HepG2 (cell line): ENCODE measurements at regions of chr7 and their contacts with region 1.

Region 1: DNA sequence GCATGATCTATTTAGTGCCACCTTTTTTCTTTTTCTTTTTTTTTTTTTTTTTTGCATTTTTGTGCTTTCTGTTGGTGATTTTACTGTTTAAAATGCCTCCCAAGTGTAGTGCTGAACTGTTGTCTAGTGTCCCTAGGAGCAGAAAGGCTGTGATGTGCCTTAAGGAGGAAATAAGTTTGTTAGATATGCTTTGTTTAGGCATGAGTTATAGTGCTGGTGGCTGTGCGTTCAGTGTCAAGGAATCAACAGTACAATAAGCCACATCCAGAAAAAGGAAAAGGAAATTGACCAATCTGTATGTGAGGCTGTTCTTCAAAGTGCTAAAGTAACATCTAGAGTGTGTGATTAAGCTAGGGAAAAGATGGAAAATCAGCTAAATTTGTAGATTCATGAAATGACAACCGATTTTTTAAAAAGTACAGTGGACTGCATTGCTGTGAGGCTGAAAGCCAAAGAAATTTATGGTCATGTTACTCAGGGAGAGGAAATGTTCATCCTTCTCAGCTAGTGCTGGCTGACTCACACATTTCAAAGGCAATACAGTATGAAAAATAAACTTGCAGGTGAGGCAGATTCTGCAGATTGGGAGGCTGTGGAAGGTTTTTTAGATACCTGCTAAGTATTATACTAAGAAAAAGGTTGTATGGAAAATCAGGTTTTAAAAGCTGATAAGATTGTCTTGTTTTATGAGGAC is 122.7 kb upstream of the ADCY1 start:
- DNase-seq: no peak
- ATAC-seq: no peak
- H3K4me3 ChIP-seq: no peak overlapping the region
- H3K27ac ChIP-seq: no peak overlapping the region
- H3K4me1 ChIP-seq: peaks cover 26% of the 10 kb centered on the region
- H3K27me3 ChIP-seq: no peaks in the 10 kb centered on the region
- CTCF ChIP-seq: no peak
- EP300 ChIP-seq: no peak
- POLR2A ChIP-seq: no peak
- RAD21 ChIP-seq: no peak

Region 2: DNA sequence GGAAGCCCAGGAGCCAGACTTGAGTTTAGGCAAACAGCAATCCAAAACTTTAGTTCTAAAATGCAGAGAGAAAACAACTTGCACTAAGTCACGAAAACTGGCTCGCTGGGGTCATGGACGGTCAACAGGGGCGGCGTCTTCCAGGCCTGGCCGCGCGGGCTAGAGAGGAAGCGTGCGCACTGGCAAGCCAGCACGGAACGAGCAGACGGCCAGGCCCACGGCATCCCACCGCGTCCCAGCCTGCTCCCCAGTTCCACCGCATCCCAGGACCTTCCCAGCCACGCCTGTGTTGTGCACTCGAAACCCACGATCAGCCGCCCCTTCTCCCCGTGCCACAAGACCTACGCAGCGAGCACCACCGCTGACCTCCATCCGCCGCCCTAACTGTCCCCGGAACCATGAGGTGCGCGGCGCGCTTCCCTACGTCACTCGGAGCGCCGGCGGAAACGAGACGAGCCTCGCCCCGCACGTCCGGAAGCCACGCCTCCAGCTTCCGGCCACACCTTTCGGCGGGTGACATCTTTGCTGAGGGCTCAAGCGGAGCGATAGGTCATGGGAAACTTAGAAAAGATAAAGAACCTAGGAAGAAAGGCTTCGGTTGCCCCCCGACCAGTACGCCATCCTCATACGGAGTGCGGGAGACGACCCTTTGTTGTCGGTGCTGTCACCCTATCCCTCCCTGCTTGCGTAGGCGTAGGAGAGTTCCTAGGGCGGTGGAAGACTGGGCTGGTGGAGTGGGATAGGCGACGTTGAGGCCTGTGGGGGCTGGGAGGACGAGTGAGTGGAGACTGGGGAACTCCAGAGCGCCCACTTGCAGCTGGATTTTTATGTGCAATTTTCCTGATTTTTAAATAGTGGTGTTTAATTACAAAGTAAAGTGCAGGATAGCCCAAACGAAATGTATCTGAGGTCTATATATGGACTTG is 339.9 kb before region 1 on chr7 and contains the start of gene TBRG4:
- CTCF ChIA-PET with region 1: no interaction called
- POLR2A ChIA-PET with region 1: no interaction called
- in situ Hi-C with region 1: no loop called
- intact Hi-C with region 1: no loop called
- DNase-seq: peak; percentile 90
- ATAC-seq: peak; percentile 92
- H3K4me3 ChIP-seq: peak within 1 kb of the TSS; percentile 83 to 97 (median 92)
- H3K27ac ChIP-seq: peak within 1 kb of the TSS; percentile 94
- H3K4me1 ChIP-seq: peaks cover 57% of the 10 kb centered on the region
- H3K27me3 ChIP-seq: no peaks in the 10 kb centered on the region; a peak in 1 of 5 replicates
- CTCF ChIP-seq: peak; percentile 55
- EP300 ChIP-seq: peak in 1 of 2 experiments; percentile 27; a peak in 1 of 4 replicates
- POLR2A ChIP-seq: peak; percentile 97
- RAD21 ChIP-seq: peak; percentile 43; the same call in 1 of the 2 replicates
- total RNA-seq, gene TBRG4: 87.8 and 90.3 TPM in 2 replicates

Region 3: DNA sequence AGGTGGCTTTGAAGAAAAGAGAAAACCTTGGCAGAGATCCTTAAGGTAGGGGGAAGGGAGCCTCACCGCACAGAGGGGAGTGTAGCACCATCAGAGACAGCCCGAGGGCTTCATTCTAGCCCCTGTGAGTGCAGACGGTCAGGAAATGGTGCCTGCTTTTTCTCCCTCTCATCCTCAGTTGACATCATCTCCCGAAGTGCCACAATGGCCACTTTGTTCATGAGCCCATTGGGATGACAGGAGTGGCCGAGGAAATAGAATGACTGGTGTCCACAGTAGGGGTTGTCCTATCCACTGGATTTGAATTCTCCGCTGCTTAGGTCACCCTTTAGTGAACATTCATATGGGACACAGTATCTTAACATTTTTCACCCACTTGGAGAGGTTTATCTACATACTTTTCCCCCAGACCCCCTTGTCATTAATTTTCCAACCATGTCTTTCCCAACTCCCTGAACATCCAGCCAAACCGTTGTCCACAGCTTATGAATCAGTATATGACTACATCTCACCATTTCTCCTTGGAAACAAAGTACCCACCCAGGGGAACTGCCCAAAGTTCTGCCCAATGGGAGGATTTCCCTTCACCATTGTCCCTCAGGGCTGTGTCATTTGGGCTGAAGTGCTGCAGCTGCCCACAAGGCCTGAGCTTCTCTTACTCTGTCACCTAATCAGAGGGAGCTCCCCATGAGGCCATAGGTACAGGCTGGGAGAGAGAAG is 231.5 kb after region 1 on chr7:
- CTCF ChIA-PET with region 1: no interaction called
- POLR2A ChIA-PET with region 1: no interaction called
- in situ Hi-C with region 1: no loop called
- intact Hi-C with region 1: no loop called
- DNase-seq: no peak
- ATAC-seq: no peak
- H3K4me3 ChIP-seq: no peak overlapping the region
- H3K27ac ChIP-seq: no peak overlapping the region
- H3K4me1 ChIP-seq: peaks cover 10% of the 10 kb centered on the region; the same call in 1 of the 2 replicates
- H3K27me3 ChIP-seq: peaks cover 0 to 3% of the 10 kb centered on the region in 2 experiments; a peak in 1 of 5 replicates
- CTCF ChIP-seq: no peak
- EP300 ChIP-seq: no peak
- POLR2A ChIP-seq: no peak
- RAD21 ChIP-seq: no peak

Region 4: DNA sequence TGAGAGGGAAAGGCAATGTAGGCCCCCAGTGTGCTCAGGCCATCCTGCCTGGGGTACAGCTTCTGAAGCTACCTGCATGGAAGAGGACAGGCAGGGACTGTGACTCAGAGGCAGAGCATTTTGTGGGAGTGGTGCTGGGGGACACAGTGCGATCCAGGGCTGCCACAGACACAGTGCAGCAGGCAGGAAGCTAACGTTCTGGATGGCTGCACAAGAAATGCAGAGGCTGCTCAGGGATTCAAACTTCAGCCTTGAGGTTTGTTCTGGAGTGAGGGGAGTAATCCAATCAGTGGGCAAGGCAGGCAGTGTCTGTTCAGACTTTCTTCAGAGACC is 1117.6 kb after region 1 on chr7:
- CTCF ChIA-PET with region 1: no interaction called
- POLR2A ChIA-PET with region 1: no interaction called
- in situ Hi-C with region 1: no loop called
- intact Hi-C with region 1: loop called (anchors 5 kb)
- DNase-seq: peak; percentile 3
- ATAC-seq: peak; percentile 65
- H3K4me3 ChIP-seq: no peak overlapping the region
- H3K27ac ChIP-seq: no peak overlapping the region
- H3K4me1 ChIP-seq: no peaks in the 10 kb centered on the region
- H3K27me3 ChIP-seq: no peaks in the 10 kb centered on the region
- CTCF ChIP-seq: no peak
- EP300 ChIP-seq: no peak
- POLR2A ChIP-seq: no peak
- RAD21 ChIP-seq: no peak